ENCODE measurements at regions of chr1 and their contacts with region 1.

Region 1: GRCh38 chr1:48109390-48110013 is 112.3 kb upstream of the TRABD2B start:
- DNase-seq: no peak
- H3K4me3 ChIP-seq: no peak overlapping the region
- H3K27ac ChIP-seq: no peak overlapping the region
- H3K4me1 ChIP-seq: no peaks in the 10 kb centered on the region
- H3K27me3 ChIP-seq: no peaks in the 10 kb centered on the region
- CTCF ChIP-seq: peak; percentile 73 to 85 (median 75)
- EP300 ChIP-seq: no peak
- POLR2A ChIP-seq: no peak

Region 2: DNA sequence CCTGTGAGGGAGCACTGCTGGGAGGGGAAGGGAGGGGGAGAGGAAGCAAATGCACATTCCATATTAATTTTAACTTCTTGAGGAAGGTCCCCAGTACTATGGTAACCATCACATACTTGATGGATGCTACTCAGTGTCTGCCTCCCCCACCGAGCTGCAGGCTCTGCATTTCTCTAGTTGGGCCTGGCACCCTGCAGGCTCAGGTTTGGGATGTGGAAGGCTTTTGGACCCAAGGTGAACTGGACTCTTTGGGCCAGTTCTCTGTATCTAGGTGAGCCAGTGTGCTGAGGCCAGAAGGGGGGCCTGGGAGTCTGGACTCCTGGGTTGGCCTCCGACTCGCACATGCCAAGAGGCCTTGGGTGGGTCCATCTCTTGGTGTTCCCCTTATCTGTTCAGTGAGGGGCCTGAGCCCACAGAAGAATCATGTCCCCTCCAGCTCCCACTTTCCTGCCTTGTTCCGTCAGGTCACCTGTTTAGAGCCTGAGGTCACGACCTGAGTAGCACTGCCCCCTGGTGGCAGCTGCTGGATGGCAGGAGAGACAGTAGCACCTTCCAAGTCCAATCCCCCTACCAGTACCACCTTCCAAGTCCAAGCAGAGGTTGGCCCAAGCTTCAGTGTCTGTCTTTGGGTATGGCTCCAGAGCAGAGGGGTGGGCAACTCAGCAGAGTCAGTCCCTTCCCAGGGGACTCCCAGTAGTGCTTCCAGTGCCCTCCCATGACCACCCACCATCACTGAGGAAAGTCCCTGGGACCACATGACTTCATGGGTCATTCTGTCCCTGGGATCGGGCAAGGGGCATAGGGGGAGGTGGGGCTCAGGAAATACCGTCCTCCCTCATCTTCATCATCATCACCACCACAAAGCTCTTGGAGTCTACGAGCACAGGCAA is 354.2 kb before region 1 on chr1:
- in situ Hi-C with region 1: no loop called
- intact Hi-C with region 1: no loop called
- DNase-seq: peak; percentile 63
- H3K4me3 ChIP-seq: no peak overlapping the region
- H3K27ac ChIP-seq: no peak overlapping the region
- H3K4me1 ChIP-seq: peaks cover 6 to 19% (median 16%) of the 10 kb centered on the region in 4 donors
- H3K27me3 ChIP-seq: no peaks in the 10 kb centered on the region
- CTCF ChIP-seq: peak; percentile 50 to 72 (median 60)
- EP300 ChIP-seq: no peak
- POLR2A ChIP-seq: no peak

Region 3: GRCh38 chr1:48127735-48128685 is 18.5 kb after region 1 on chr1:
- in situ Hi-C with region 1: no loop called
- intact Hi-C with region 1: no loop called
- DNase-seq: no peak
- H3K4me3 ChIP-seq: no peak overlapping the region
- H3K27ac ChIP-seq: no peak overlapping the region
- H3K4me1 ChIP-seq: no peaks in the 10 kb centered on the region
- H3K27me3 ChIP-seq: no peaks in the 10 kb centered on the region
- CTCF ChIP-seq: no peak
- EP300 ChIP-seq: no peak
- POLR2A ChIP-seq: no peak

Region 4: DNA sequence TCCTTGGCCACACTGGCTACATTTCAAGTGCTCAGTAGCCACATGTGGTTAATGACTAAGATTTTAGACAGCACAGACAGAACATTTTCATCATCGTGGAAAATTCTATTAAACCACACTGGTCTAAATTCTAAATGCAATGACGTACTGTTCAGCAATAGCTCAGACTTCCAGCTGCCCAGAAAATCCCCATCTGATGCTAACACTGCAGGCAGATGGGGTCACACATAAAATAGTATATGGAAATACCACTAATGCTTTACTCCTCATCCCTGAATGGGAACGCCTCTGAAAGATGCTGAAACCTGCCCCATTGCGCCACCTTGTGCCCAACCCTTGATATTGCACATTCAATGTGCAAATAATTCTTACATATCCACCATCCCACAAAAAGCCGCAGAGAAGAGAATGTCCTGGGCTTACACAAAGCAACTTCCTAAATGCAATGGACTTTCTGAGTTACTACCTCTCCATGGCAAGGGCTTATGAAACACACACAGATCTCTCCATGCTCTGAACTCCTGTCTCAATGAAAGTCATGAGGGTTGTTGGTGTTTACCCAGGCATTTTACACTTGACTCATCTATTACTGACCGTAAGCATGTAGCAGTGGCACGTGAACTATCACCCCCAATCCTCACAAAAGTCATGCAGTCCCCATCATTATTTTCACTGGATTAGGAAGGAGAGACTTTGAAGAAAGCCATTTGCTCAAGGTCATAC is 92.7 kb after region 1 on chr1:
- in situ Hi-C with region 1: loop called in 3 of 4 experiments (anchors 10 to 25 kb)
- intact Hi-C with region 1: no loop called
- DNase-seq: peak; percentile 72
- H3K4me3 ChIP-seq: no peak overlapping the region
- H3K27ac ChIP-seq: no peak overlapping the region
- H3K4me1 ChIP-seq: peaks cover 0 to 3% (median 0%) of the 10 kb centered on the region in 4 donors
- H3K27me3 ChIP-seq: peaks cover 4% of the 10 kb centered on the region
- CTCF ChIP-seq: peak; percentile 67 to 80 (median 75)
- EP300 ChIP-seq: no peak
- POLR2A ChIP-seq: no peak

Region 5: DNA sequence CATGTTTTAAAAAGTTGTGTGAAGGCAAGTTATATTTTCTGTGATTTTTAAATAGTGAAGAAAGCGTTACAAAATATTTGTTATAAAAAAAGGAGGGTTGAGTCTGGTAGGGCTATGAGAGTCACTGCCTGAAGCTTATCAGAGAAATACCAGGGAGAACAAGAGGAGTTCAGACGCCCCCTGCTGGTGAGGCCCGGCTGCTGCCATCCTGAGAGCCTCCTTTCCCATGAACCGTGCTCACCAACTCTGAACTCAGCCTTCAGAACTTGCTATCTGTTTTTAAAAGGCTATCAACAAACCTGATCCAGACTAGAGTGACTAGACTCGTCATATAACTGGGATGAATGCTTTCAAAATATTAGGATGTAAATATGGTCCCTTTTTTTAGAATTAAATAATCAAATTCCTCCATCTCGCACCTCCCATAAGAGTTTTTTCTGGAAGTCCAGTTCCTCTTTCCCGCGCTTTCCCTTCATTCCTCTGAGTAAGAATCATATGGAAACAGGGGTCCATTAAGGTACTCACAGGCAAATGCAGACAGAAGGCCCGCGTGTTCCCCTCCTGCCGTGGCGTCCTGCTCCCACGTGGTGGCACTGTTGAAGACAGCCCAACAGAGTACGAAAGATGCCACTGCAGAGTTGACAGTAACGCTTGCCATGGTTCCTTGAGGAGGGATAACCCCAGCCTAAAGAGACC is 388.7 kb after region 1 on chr1:
- in situ Hi-C with region 1: loop called in 2 of 4 experiments (anchors 25 kb)
- intact Hi-C with region 1: loop called (anchors 5 kb)
- DNase-seq: peak; percentile 85
- H3K4me3 ChIP-seq: no peak overlapping the region
- H3K27ac ChIP-seq: no peak overlapping the region
- H3K4me1 ChIP-seq: peaks cover 11 to 21% (median 16%) of the 10 kb centered on the region in 4 donors
- H3K27me3 ChIP-seq: no peaks in the 10 kb centered on the region
- CTCF ChIP-seq: peak; percentile 82 to 94 (median 89)
- EP300 ChIP-seq: no peak
- POLR2A ChIP-seq: no peak

Region 6: DNA sequence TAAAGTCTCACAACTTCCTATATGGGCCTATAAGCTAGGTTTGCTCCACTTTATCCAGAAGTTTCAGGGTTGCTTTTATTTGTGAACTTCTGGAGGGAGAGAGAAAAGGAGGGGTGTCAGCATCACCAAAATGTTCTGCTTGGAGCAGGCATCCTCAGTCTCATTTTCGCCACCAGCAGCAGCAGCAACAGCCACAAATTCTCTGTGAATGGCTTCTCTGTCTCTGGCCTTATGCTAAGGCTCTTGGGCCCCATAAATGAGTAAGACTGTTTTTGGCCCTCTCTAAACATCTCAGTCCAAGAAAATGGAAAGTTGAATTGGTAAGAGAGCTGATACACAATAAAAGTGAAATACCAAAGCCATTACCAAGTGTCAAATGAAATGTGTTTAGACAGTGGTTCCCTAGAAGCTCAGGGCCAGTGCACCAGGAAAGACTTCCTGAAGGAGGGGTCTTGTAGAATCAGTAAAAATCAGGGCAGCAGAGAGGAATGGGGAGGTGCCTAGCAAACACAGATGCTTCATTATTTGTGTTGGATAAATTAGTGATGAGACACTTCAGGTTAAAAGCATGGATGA is 415.5 kb after region 1 on chr1:
- in situ Hi-C with region 1: loop called in 2 of 4 experiments (anchors 25 kb)
- intact Hi-C with region 1: no loop called
- DNase-seq: no peak
- H3K4me3 ChIP-seq: no peak overlapping the region
- H3K27ac ChIP-seq: no peak overlapping the region
- H3K4me1 ChIP-seq: peaks cover 0 to 19% (median 5%) of the 10 kb centered on the region in 4 donors
- H3K27me3 ChIP-seq: no peaks in the 10 kb centered on the region
- CTCF ChIP-seq: no peak
- EP300 ChIP-seq: no peak
- POLR2A ChIP-seq: no peak

Measured in transverse colon (tissue), 4 donors.